ENCODE measurements at regions of chr1 and their contacts with region 1.

Region 1: DNA sequence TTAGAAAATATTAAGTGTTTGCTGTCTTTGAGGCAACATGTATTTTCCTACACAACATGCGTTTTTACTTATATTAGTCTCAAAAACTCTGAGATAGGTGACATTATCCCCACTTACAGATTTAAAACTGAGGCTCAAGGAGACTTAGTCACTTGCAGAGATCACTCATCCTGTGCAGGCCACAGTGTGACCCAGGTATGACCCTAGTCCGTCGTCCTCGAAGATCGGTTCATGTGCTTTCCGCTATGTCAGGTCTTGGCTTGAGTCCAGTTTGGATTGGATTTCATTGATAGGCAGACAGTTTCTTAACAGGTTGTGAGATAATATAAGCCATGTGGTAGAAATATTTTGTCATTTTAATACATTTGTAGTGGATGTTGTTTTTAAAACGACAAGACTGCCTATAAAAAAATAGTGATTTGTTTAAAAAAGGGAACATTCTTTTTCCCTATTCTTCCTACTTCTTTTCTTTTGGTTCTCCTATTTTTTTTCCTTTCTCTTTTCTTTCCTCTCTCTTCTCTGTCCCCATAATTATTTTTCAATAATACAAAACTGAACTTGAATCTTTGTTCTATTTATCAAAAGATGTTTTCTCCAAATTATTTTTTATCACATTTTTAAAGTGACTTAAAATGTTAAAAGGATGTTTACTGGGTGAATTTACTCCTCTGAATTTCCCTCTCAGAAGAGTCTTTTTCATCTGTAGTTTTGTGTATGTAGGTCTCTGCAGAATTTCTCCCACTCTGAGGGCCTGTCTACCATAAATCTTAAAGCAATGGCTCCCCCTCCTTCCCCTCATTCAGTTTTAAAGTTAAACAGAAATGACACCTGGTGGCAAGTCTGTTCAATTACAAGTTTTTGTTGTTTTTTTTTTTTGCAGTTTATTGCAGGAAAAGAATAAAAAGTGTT is 81.8 kb downstream of the PHTF1 start:
- DNase-seq: peak; percentile 52
- H3K4me3 Mint-ChIP-seq: no peak overlapping the region
- H3K27ac Mint-ChIP-seq: peak overlapping the region; percentile 61
- H3K4me1 Mint-ChIP-seq: peaks cover 16% of the 10 kb centered on the region
- H3K27me3 Mint-ChIP-seq: no peaks in the 10 kb centered on the region
- CTCF ChIP-seq: peak; percentile 50

Region 2: GRCh38 chr1:113452921-113453770 is 224.4 kb before region 1 on chr1:
- CTCF ChIA-PET with region 1: interaction called, 4 read pairs
- POLR2A ChIA-PET with region 1: interaction called, 3 read pairs
- intact Hi-C with region 1: loop called (anchors 1 kb)
- DNase-seq: peak; percentile 65
- H3K4me3 Mint-ChIP-seq: no peak overlapping the region
- H3K27ac Mint-ChIP-seq: peak overlapping the region; percentile 65
- H3K4me1 Mint-ChIP-seq: peaks cover 45% of the 10 kb centered on the region
- H3K27me3 Mint-ChIP-seq: no peaks in the 10 kb centered on the region
- CTCF ChIP-seq: peak; percentile 44